Posterior vena cava (tissue), 2 donors: ENCODE measurements at regions of chr1 and their contacts with region 1.

Region 1: GRCh38 chr1:190619724-190620123 is 142.1 kb upstream of the BRINP3 start:
- DNase-seq: no peak

Region 2: GRCh38 chr1:189821833-189822232 is 797.9 kb before region 1 on chr1:
- intact Hi-C with region 1: loop called in 1 of 2 experiments (anchors 10 kb)
- DNase-seq: no peak